ENCODE measurements at regions of chr3 and their contacts with region 1.

Region 1: GRCh38 chr3:33047842-33048834 is 48.8 kb downstream of the GLB1 start:
- DNase-seq: peak; percentile 61
- ATAC-seq: peak; percentile 85
- H3K4me3 Mint-ChIP-seq: peak overlapping the region; percentile 79
- H3K27ac Mint-ChIP-seq: peak overlapping the region; percentile 92
- H3K4me1 Mint-ChIP-seq: peaks cover 57% of the 10 kb centered on the region
- H3K27me3 Mint-ChIP-seq: peaks cover 1% of the 10 kb centered on the region

Region 2: GRCh38 chr3:33063651-33064051 is 15.5 kb after region 1 on chr3:
- POLR2A ChIA-PET with region 1: interaction called, 19 read pairs
- DNase-seq: peak; percentile 40
- ATAC-seq: peak; percentile 75
- H3K4me3 Mint-ChIP-seq: peak overlapping the region; percentile 57
- H3K27ac Mint-ChIP-seq: peak overlapping the region; percentile 67
- H3K4me1 Mint-ChIP-seq: peaks cover 44% of the 10 kb centered on the region
- H3K27me3 Mint-ChIP-seq: no peaks in the 10 kb centered on the region

Measured in activated naive CD8-positive, alpha-beta T cell treated with anti-CD3 and anti-CD28 coated beads, Interleukin-2, amount 10 ng/mL, durations not matched to agents 7 days and 5 days (primary cell).